Activated CD4-positive, alpha-beta memory T cell treated with anti-CD3 and anti-CD28 coated beads for 36 hours (primary cell): ENCODE measurements at regions of chr11 and their contacts with region 1.

Region 1: GRCh38 chr11:64894070-64894796 is 15.8 kb upstream of the EHD1 start:
- DNase-seq: peak; percentile 94
- H3K4me3 Mint-ChIP-seq: no peak overlapping the region
- H3K27ac Mint-ChIP-seq: peak overlapping the region; percentile 46
- H3K4me1 Mint-ChIP-seq: peaks cover 2% of the 10 kb centered on the region
- H3K27me3 Mint-ChIP-seq: no peaks in the 10 kb centered on the region

Region 2: GRCh38 chr11:64846998-64847666 is 47.1 kb before region 1 on chr11:
- CTCF ChIA-PET with region 1: interaction called, 1,198 read pairs
- POLR2A ChIA-PET with region 1: interaction called, 4 read pairs
- intact Hi-C with region 1: loop called (anchors 1 kb)
- DNase-seq: peak; percentile 94
- H3K4me3 Mint-ChIP-seq: no peak overlapping the region
- H3K27ac Mint-ChIP-seq: peak overlapping the region; percentile 18
- H3K4me1 Mint-ChIP-seq: peaks cover 48% of the 10 kb centered on the region
- H3K27me3 Mint-ChIP-seq: no peaks in the 10 kb centered on the region